Esophagus muscularis mucosa (tissue), 4 donors: ENCODE measurements at regions of chr20 and their contacts with region 1.

Region 1: DNA sequence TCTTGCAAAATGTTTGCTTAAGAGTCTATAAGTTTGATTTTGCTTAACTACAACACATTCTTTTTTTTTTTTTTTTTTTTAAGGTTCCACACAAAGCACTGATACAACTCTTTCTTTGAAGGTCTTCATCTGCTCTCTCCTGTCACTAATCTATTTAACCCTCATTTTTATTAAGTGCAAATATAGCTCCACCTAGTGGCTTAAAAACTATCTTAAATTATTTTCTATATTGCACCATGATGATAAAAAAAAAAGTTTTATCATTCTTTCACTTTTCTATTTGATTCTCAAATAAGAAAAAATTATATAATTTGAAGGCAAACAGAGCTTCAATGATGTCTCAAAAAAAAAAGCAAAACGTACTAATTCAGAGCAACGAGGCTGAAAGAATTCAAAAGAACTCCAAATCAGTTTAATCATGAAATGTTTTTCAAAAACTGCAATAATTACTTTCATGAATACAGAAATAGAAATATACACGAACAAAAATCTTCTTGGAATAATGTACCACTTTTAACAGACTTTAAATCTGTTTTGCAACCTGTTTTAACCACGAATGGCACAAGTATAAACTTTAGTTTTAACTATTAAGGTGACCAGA is 12.8 kb downstream of the ESF1 start:
- DNase-seq: no peak
- H3K4me3 ChIP-seq: no peak overlapping the region
- H3K27ac ChIP-seq: no peak overlapping the region
- H3K4me1 ChIP-seq: no peaks in the 10 kb centered on the region
- H3K27me3 ChIP-seq: no peaks in the 10 kb centered on the region
- CTCF ChIP-seq: peak; percentile 32 to 59 (median 58)
- EP300 ChIP-seq: no peak
- POLR2A ChIP-seq: no peak

Region 2: DNA sequence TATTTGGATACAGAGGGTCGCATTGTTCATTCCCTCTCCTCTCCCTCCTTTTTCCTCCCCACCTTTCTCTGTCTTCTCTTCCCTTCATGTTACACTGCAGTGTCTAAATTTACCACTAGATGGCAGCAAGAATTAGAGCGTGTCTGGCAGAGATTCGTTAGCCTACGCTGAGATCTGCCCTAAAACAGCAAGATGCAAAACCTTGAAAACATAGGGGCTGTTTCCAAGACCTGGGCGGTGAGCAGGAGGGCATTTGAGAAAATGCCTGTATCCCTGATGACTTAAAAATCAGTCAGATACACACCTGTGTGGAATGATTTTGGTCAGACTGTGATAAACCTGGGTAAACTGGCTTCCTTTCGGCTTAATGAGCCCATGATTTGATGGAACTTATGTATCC is 652.4 kb before region 1 on chr20:
- intact Hi-C with region 1: loop called (anchors 5 kb)
- DNase-seq: no peak
- H3K4me3 ChIP-seq: no peak overlapping the region
- H3K27ac ChIP-seq: no peak overlapping the region
- H3K4me1 ChIP-seq: no peaks in the 10 kb centered on the region
- H3K27me3 ChIP-seq: no peaks in the 10 kb centered on the region
- CTCF ChIP-seq: peak; percentile 80 to 89 (median 83)
- EP300 ChIP-seq: no peak
- POLR2A ChIP-seq: no peak

Region 3: GRCh38 chr20:13312300-13312699 is 459.7 kb before region 1 on chr20:
- intact Hi-C with region 1: loop called (anchors 10 kb)
- DNase-seq: no peak
- H3K4me3 ChIP-seq: no peak overlapping the region
- H3K27ac ChIP-seq: no peak overlapping the region
- H3K4me1 ChIP-seq: no peaks in the 10 kb centered on the region
- H3K27me3 ChIP-seq: no peaks in the 10 kb centered on the region
- CTCF ChIP-seq: no peak
- EP300 ChIP-seq: no peak
- POLR2A ChIP-seq: no peak

Region 4: GRCh38 chr20:13341781-13342277 is 430.1 kb before region 1 on chr20:
- intact Hi-C with region 1: no loop called
- DNase-seq: no peak
- H3K4me3 ChIP-seq: no peak overlapping the region
- H3K27ac ChIP-seq: no peak overlapping the region
- H3K4me1 ChIP-seq: peaks cover 0 to 9% (median 0%) of the 10 kb centered on the region in 4 donors
- H3K27me3 ChIP-seq: no peaks in the 10 kb centered on the region
- CTCF ChIP-seq: no peak
- EP300 ChIP-seq: no peak
- POLR2A ChIP-seq: no peak

Region 5: GRCh38 chr20:13554706-13555105 is 217.2 kb before region 1 on chr20:
- intact Hi-C with region 1: loop called (anchors 10 kb)
- DNase-seq: no peak
- H3K4me3 ChIP-seq: no peak overlapping the region
- H3K27ac ChIP-seq: peak overlapping the region in 1 of 4 donors; percentile 27
- H3K4me1 ChIP-seq: peaks cover 0 to 15% (median 10%) of the 10 kb centered on the region in 4 donors
- H3K27me3 ChIP-seq: no peaks in the 10 kb centered on the region
- CTCF ChIP-seq: no peak
- EP300 ChIP-seq: no peak
- POLR2A ChIP-seq: no peak

Region 6: GRCh38 chr20:13638496-13639222 is 133.3 kb before region 1 on chr20 and contains the start of gene TASP1:
- intact Hi-C with region 1: loop called (anchors 10 kb)
- DNase-seq: peak; percentile 99
- H3K4me3 ChIP-seq: peak within 1 kb of the TSS; percentile 68 to 96 (median 89)
- H3K27ac ChIP-seq: peak within 1 kb of the TSS; percentile 80 to 82 (median 81)
- H3K4me1 ChIP-seq: peaks cover 0 to 15% (median 13%) of the 10 kb centered on the region in 4 donors
- H3K27me3 ChIP-seq: no peaks in the 10 kb centered on the region
- CTCF ChIP-seq: no peak
- EP300 ChIP-seq: no peak
- POLR2A ChIP-seq: no peak
- total RNA-seq, gene TASP1: 11.6 to 15.7 (median 13.0) TPM

Region 7: GRCh38 chr20:15113144-15113773 is 1341.3 kb after region 1 on chr20:
- intact Hi-C with region 1: no loop called
- DNase-seq: no peak
- H3K4me3 ChIP-seq: no peak overlapping the region
- H3K27ac ChIP-seq: no peak overlapping the region
- H3K4me1 ChIP-seq: no peaks in the 10 kb centered on the region
- H3K27me3 ChIP-seq: no peaks in the 10 kb centered on the region
- CTCF ChIP-seq: no peak
- EP300 ChIP-seq: no peak
- POLR2A ChIP-seq: no peak